Breast epithelium (tissue), 4 donors: ENCODE measurements at regions of chr16 and their contacts with region 1.

Region 1: DNA sequence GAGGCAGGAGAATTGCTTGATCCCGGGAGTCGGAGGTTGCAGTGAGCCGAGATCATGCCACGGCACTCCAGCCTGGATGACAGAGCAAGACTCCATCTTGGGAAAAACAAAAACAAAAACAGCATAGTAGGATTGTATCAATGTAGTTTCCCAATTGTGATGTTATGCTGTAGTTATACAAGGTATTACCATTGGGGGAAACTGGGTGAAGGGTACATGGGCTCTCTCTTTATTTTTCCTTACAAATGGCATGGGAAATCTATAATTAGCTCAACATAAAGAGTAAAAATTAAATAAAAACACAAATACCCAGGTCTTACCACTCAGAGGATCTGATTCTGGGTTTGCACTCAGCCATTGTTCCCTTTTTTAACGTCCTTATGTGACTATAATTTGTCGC is 107.9 kb downstream of the KATNIP start:
- DNase-seq: no peak
- H3K4me3 ChIP-seq: no peak overlapping the region
- H3K27ac ChIP-seq: no peak overlapping the region
- H3K4me1 ChIP-seq: no peaks in the 10 kb centered on the region
- H3K27me3 ChIP-seq: no peaks in the 10 kb centered on the region
- CTCF ChIP-seq: no peak
- POLR2A ChIP-seq: no peak

Region 2: DNA sequence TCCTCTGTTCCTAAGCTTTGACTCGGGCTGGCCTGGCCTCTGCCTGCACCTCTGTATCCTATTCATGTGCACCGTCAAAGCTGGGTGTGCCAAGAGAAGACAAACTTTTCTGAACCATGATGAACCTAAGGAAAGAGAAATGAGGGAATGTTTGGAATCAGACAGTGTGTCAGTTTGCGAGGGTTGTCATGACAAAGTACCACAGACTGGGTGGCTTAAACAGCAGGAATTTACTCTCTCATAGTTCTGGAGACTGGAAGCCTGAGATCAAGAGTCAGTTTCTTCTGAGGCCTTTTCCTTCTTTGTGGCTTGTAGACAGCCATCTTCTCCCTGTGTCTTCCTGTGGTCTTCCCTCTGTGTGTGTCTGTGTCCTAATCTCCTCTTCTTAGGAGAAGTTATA is 21.1 kb after region 1 on chr16:
- intact Hi-C with region 1: loop called (anchors 1 kb)
- DNase-seq: no peak
- H3K4me3 ChIP-seq: no peak overlapping the region
- H3K27ac ChIP-seq: no peak overlapping the region
- H3K4me1 ChIP-seq: no peaks in the 10 kb centered on the region
- H3K27me3 ChIP-seq: no peaks in the 10 kb centered on the region
- CTCF ChIP-seq: no peak
- POLR2A ChIP-seq: no peak

Region 3: DNA sequence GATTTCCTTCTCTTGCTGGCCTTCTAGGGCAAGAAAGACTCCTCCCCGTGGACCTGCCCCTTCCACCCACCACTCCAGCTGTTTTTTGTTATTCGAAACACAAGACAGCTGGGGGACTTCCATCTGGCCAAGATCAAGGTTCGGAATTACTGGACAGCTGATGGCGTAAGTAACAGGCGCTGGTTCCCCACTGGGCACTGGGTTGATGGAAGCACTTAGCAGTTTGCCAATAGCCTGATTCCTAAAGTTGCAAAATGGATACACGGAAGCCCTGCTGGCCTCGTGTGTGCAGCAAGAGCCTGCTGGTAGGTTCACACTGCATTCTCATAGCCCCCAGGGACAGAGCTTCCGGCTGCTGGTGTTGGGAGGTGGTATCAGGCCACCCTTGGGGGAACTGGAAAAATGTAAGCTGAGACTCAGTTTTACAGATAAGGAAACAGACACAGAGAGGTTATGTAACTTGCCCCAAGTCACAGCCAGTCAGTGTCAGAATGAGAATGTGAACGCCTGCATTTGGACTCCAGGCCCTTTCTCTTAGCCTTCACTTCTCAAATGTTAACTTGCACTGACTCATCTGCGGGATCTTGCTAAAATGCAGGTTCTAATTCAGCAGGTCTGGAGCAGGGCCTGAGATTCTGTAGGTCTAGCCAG is 63.8 kb after region 1 on chr16:
- intact Hi-C with region 1: no loop called
- DNase-seq: peak in 1 of 2 donors; percentile 42
- H3K4me3 ChIP-seq: peak overlapping the region; percentile 22 to 51 (median 28)
- H3K27ac ChIP-seq: peak overlapping the region; percentile 43 to 86
- H3K4me1 ChIP-seq: peaks cover 3 to 11% of the 10 kb centered on the region in 2 donors
- H3K27me3 ChIP-seq: no peaks in the 10 kb centered on the region
- CTCF ChIP-seq: no peak
- POLR2A ChIP-seq: no peak

Region 4: DNA sequence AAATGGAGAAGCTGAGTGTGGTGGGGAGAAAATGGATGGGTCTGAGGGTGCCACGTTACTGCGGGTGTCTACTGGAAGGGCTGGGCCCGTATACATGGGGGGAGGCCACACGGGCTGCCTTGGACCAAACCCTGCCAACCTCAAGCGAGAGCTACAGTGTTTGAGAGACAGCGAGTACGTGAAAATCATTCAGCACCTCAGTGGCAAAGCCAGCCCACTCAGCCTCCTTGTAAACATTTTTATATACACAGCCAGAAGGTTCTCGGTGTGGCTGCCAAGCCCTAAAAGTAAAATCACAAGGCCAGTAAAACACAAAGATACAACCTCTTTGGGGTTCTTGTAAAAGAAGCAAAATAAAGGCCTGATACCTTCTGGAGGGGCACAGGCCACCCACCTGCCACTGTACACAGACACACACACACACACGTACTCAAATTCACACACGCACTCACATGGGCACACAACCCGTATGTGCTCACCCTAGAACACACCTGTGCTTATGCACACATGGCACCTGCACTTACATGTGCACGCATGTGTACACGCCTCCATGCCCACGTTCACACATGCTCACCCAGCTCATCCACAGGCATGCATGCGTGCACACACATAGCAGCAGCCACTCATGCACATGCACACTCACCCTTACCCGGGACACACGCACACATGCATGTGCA is 302.9 kb after region 1 on chr16:
- intact Hi-C with region 1: no loop called
- DNase-seq: no peak
- H3K4me3 ChIP-seq: no peak overlapping the region
- H3K27ac ChIP-seq: no peak overlapping the region
- H3K4me1 ChIP-seq: no peaks in the 10 kb centered on the region
- H3K27me3 ChIP-seq: peaks cover 0 to 3% of the 10 kb centered on the region in 2 donors
- CTCF ChIP-seq: no peak
- POLR2A ChIP-seq: no peak